HepG2 (cell line): ENCODE measurements at regions of chr5 and their contacts with region 1.

Region 1: DNA sequence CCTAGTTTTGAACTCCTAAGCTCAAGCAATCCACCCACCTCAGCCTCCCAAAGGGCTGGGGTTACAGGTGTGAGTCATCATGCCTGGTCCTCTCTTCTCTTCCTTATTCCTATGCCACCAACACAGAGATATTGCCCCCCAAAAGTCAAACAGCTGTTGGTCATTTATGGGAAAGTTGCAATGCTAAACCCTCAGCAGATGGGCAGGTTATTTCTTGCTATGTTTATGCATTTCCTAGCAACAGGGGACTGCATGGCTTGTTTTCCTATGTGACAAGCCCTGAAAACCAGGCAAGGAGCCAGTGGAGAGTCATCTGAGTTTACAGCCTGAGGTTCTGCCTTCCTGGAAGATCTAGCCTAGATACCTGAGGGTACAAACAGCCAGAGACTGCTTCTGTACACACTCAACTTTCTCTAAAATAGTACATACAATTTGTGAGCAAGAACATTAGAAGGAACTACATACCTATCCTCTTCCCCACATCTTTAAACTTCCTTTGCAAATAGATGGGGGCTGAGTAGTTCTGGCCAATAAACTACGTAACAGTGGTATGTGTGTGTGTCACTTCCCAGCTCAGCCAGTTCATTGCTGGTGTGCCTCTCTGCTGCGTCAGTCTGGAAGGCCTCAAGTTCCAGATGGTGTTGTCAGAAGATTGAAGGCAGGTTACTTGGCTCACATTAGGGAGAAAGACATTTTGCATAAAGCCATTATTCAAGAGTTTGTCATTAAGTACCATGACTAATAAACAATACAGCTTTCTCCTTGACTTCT is 65.4 kb downstream of the CSNK1A1 start:
- DNase-seq: peak; percentile 53
- ATAC-seq: peak; percentile 25
- H3K4me3 ChIP-seq: no peak overlapping the region
- H3K27ac ChIP-seq: no peak overlapping the region
- H3K4me1 ChIP-seq: peaks cover 71% of the 10 kb centered on the region
- H3K27me3 ChIP-seq: no peaks in the 10 kb centered on the region
- CTCF ChIP-seq: no peak
- EP300 ChIP-seq: no peak
- POLR2A ChIP-seq: no peak
- RAD21 ChIP-seq: no peak

Region 2: GRCh38 chr5:149452007-149452664 is 33.7 kb before region 1 on chr5:
- CTCF ChIA-PET with region 1: no interaction called
- POLR2A ChIA-PET with region 1: interaction called, 4 read pairs
- in situ Hi-C with region 1: no loop called
- intact Hi-C with region 1: loop called (anchors 2 kb)
- DNase-seq: peak; percentile 98
- ATAC-seq: peak; percentile 83
- H3K4me3 ChIP-seq: peak overlapping the region; percentile 25 to 62 (median 33); a peak in 5 of 6 replicates
- H3K27ac ChIP-seq: peak overlapping the region; percentile 93
- H3K4me1 ChIP-seq: peaks cover 85% of the 10 kb centered on the region
- H3K27me3 ChIP-seq: no peaks in the 10 kb centered on the region
- CTCF ChIP-seq: peak; percentile 54
- EP300 ChIP-seq: peak; percentile 77 to 93; a peak in 3 of 4 replicates
- POLR2A ChIP-seq: peak; percentile 56 to 57
- RAD21 ChIP-seq: no peak; the same call in 1 of the 2 replicates

Region 3: GRCh38 chr5:149782018-149782894 is 296.4 kb after region 1 on chr5:
- CTCF ChIA-PET with region 1: no interaction called
- POLR2A ChIA-PET with region 1: no interaction called
- in situ Hi-C with region 1: no loop called
- intact Hi-C with region 1: no loop called
- DNase-seq: no peak
- ATAC-seq: no peak
- H3K4me3 ChIP-seq: no peak overlapping the region
- H3K27ac ChIP-seq: no peak overlapping the region
- H3K4me1 ChIP-seq: peaks cover 10% of the 10 kb centered on the region
- H3K27me3 ChIP-seq: no peaks in the 10 kb centered on the region
- CTCF ChIP-seq: no peak
- EP300 ChIP-seq: no peak
- POLR2A ChIP-seq: no peak
- RAD21 ChIP-seq: no peak